Common myeloid progenitor, CD34-positive (primary cell): ENCODE measurements at regions of chr10 and their contacts with region 1.

Region 1: DNA sequence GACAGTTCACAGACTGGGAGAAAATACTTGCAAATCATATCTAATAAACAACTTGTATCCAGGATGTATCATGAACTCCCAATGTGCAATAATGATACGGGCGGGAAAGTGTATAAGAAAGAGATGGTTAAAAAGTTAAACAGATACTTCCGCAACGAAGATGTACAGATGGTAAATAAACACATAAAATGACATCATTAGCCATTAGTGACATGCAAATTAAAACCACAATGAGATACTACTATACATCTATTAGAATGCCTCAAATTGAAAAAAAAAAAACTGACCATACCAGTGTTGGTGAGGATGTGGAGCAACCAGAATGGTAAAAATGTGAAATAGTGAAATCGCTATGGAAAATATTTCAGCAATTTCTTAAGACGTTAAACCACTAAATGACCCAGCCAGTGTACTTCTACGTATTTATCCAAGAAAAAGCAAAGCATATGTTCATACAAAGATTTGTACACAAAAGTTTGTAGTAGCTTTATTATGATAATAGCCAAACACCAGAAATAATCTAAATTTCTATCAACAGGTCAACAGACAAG is 83.5 kb downstream of the IPMK start:
- DNase-seq: no peak
- H3K4me3 ChIP-seq: no peak overlapping the region
- H3K27ac ChIP-seq: no peak overlapping the region
- H3K4me1 ChIP-seq: no peaks in the 10 kb centered on the region
- H3K27me3 ChIP-seq: peaks cover 0 to 3% (median 0%) of the 10 kb centered on the region in 5 experiments

Region 2: GRCh38 chr10:58291538-58292174 is 107.5 kb after region 1 on chr10:
- CTCF ChIA-PET with region 1: interaction called, 143 read pairs
- POLR2A ChIA-PET with region 1: no interaction called
- DNase-seq: peak; percentile 57 to 74 (median 68)
- H3K4me3 ChIP-seq: no peak overlapping the region
- H3K27ac ChIP-seq: no peak overlapping the region
- H3K4me1 ChIP-seq: no peaks in the 10 kb centered on the region
- H3K27me3 ChIP-seq: no peaks in the 10 kb centered on the region